Activated CD4-positive, alpha-beta memory T cell treated with anti-CD3 and anti-CD28 coated beads, Interleukin-2, amount 10 ng/mL, durations not matched to agents 7 days and 5 days (primary cell): ENCODE measurements at regions of chr2 and their contacts with region 1.

Region 1: DNA sequence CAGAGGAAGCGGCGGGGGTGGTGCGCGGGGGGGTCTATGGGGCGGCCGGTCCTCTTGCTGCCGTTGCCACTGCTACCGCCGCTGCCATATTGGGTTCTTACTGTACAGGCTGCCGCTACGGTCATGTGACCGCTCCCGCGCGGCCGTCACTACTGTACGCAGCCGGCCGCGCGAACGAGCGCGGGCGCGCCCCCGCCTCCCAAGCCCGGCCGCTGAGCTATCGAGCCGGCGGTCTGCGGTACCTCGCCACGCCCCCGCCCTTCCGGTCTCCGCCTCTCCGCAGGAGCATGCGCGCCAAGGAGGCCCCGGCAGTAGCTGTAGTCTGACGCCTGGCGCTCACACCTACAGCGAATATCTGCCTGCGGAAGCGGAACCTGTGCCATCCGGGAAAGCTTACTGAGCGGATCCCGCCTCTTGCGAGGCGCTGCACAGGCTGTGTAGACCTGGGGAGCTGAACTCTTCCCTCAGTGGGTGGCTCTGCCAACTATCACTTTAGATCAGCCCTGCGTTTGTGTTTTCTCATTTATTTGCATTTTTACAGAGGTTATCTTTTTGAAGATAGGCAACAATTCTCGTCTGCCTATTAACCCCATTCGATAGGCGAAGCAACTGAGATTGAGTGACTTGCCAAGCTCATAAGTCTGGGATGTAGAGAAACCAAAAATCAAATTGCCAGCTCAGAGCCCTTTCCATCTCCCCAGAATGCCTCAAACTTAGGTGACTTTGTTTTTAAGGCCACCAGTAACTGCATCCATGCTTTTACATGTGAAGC is at the start of gene ASXL2:
- DNase-seq: peak; percentile 98
- H3K4me3 Mint-ChIP-seq: peak within 1 kb of the TSS; percentile 95
- H3K27ac Mint-ChIP-seq: peak within 1 kb of the TSS; percentile 99
- H3K4me1 Mint-ChIP-seq: peaks cover 41% of the 10 kb centered on the region
- H3K27me3 Mint-ChIP-seq: no peaks in the 10 kb centered on the region
- total RNA-seq, gene ASXL2: 43.7 to 45.0 TPM

Region 2: DNA sequence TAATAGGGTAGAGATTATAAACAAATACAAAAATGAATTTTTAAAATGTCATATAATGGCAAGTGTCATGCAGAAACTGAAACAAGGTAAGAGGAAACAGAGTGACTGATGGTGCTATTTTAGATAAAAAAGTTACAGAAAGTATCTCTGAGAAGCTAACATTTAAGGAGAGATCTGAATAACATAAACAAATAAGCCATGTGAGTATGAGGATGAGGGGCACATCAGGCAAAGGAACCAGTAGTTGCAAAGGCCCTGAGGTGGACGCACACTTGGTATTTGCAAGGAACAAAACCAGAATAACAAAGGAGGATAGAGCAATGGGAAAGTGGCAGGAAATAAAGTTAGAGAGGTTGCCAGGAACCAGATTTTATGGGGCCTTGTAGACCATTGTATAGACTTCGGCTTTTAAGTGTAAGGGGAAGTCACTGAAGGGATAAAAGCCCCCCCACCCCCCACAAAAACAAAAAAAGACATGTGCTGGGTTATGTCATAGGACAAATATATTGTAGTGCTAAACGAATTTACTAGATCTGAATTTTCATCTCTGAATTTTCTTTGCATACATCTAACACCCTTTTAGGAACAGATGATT is 364.4 kb before region 1 on chr2:
- CTCF ChIA-PET with region 1: no interaction called
- POLR2A ChIA-PET with region 1: no interaction called
- DNase-seq: no peak
- H3K4me3 Mint-ChIP-seq: no peak overlapping the region
- H3K27ac Mint-ChIP-seq: no peak overlapping the region
- H3K4me1 Mint-ChIP-seq: peaks cover 19% of the 10 kb centered on the region
- H3K27me3 Mint-ChIP-seq: no peaks in the 10 kb centered on the region

Region 3: DNA sequence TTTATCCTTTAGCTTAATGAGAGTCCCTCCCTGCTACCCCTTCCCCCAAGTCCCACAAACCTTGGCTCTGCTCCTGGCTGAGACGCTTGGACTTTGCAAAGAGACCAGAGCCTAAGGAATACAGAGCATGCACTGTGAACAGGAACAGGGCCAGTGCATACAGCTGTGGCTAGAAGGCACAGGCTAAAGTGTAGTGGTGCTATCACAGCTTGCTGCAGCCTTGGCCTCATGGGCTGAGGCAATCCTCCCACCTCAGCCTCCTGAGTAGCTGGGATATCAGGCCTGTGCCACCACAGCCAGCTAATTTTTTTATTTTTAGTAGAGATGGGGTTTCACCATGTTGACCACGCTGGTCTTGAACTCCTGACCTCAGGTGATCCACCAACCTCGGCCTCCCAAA is 39.3 kb after region 1 on chr2:
- CTCF ChIA-PET with region 1: interaction called, 3 read pairs
- POLR2A ChIA-PET with region 1: interaction called, 12 read pairs
- DNase-seq: no peak
- H3K4me3 Mint-ChIP-seq: no peak overlapping the region
- H3K27ac Mint-ChIP-seq: no peak overlapping the region
- H3K4me1 Mint-ChIP-seq: peaks cover 11% of the 10 kb centered on the region
- H3K27me3 Mint-ChIP-seq: peaks cover 2% of the 10 kb centered on the region